ENCODE measurements at regions of chr5 and their contacts with region 1.

Region 1: DNA sequence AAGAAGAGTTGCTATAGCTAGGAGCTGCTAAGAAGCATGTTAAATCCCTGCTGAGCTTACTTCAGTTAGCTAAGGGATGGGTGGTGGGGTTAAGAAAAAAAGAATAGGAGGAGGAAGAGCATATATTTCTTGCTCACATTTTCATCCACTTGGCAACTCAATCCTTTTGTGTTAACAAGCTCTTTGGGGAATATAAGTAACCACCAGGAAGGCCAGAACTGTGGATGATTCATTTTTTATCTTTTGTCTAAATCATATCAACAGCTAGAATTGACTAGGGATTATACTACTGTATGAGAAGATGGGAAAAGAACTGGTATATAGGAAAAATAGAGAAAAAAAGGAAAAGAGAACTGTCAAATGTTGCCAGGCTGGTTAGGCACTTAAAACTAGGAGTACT is 555.3 kb upstream of the ARRDC3 start:
- DNase-seq: no peak
- ATAC-seq: no peak
- H3K4me3 Mint-ChIP-seq: no peak overlapping the region
- H3K27ac Mint-ChIP-seq: no peak overlapping the region
- H3K4me1 Mint-ChIP-seq: no peaks in the 10 kb centered on the region
- H3K27me3 Mint-ChIP-seq: no peaks in the 10 kb centered on the region

Region 2: GRCh38 chr5:93915142-93915553 is 1976.7 kb after region 1 on chr5:
- CTCF ChIA-PET with region 1: no interaction called
- POLR2A ChIA-PET with region 1: no interaction called
- intact Hi-C with region 1: loop called in 1 of 2 experiments (anchors 10 kb)
- DNase-seq: no peak
- ATAC-seq: peak; percentile 73
- H3K4me3 Mint-ChIP-seq: no peak overlapping the region
- H3K27ac Mint-ChIP-seq: no peak overlapping the region
- H3K4me1 Mint-ChIP-seq: no peaks in the 10 kb centered on the region
- H3K27me3 Mint-ChIP-seq: no peaks in the 10 kb centered on the region

Measured in activated CD4-positive, alpha-beta T cell treated with anti-CD3 and anti-CD28 coated beads for 36 hours (primary cell).